Naive thymus-derived CD4-positive, alpha-beta T cell (primary cell): ENCODE measurements at regions of chr11 and their contacts with region 1.

Region 1: GRCh38 chr11:57712256-57713150 is at the start of gene TMX2:
- DNase-seq: peak; percentile 73 to 96 (median 91)
- ATAC-seq: peak; percentile 94
- H3K4me3 ChIP-seq: peak within 1 kb of the TSS; percentile 98
- H3K4me3 Mint-ChIP-seq: peak within 1 kb of the TSS; percentile 86 to 99 (median 98)
- H3K27ac ChIP-seq: peak within 1 kb of the TSS; percentile 95
- H3K27ac Mint-ChIP-seq: peak within 1 kb of the TSS; percentile 87 to 99 (median 95)
- H3K4me1 ChIP-seq: peaks cover 25 to 33% of the 10 kb centered on the region in 2 donors
- H3K4me1 Mint-ChIP-seq: peaks cover 14 to 61% (median 52%) of the 10 kb centered on the region in 7 donors
- H3K27me3 ChIP-seq: no peaks in the 10 kb centered on the region
- H3K27me3 Mint-ChIP-seq: no peaks in the 10 kb centered on the region
- total RNA-seq, gene TMX2: 43.0 to 67.3 (median 64.8) TPM

Region 2: DNA sequence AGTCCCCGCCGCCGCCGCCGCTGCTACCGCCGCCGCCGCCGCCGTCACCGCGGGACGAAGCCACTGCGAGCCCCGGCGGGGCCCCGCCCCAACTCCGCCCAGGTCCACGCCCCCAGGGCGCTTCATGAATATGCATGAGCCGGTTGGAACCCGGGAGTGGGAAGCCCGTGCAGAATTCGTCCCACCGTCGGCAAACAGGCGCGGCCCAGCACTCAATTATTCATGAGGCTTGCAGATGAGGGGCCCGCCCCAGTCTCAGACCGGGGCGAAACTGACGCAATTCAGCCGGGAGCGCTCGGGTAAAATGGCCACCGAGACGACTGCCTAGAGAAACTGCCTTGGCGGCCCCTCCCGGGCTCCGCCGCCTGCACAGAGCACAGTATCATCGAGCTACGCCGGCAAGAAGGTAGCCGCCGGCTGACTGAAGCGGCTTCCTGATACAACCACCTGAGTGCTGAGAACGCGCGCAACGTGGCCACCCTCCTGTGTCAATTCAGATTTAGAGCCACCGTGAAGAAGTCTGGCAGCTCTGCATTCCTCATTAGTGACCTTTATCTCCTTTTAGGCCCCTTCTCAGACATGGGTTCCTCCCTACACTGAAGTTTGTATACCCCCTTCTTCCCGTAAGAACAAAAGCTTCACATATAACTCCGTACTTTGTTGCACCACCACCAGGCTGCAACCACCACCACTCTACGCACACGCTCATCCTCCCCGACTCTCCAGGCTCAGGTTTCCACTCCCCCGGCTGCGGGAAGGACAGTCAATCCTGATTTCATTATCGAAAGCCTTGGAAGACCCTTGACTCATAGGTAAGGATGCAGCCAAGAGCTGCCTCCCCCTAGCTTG is 387.4 kb before region 1 on chr11 and contains the start of gene TNKS1BP1:
- CTCF ChIA-PET with region 1: no interaction called
- POLR2A ChIA-PET with region 1: no interaction called
- intact Hi-C with region 1: loop called in 1 of 2 experiments (anchors 1 kb)
- DNase-seq: peak; percentile 84 to 92 (median 90)
- ATAC-seq: peak; percentile 91
- H3K4me3 ChIP-seq: peak within 1 kb of the TSS; percentile 73
- H3K4me3 Mint-ChIP-seq: peak within 1 kb of the TSS; percentile 88 to 95 (median 91)
- H3K27ac ChIP-seq: peak within 1 kb of the TSS; percentile 79
- H3K27ac Mint-ChIP-seq: peak within 1 kb of the TSS; percentile 93 to 98 (median 95)
- H3K4me1 ChIP-seq: peaks cover 8 to 14% of the 10 kb centered on the region in 2 donors
- H3K4me1 Mint-ChIP-seq: peaks cover 30 to 58% (median 51%) of the 10 kb centered on the region in 7 donors
- H3K27me3 ChIP-seq: no peaks in the 10 kb centered on the region
- H3K27me3 Mint-ChIP-seq: no peaks in the 10 kb centered on the region
- total RNA-seq, gene TNKS1BP1: 11.2 to 22.0 (median 15.9) TPM

Region 3: DNA sequence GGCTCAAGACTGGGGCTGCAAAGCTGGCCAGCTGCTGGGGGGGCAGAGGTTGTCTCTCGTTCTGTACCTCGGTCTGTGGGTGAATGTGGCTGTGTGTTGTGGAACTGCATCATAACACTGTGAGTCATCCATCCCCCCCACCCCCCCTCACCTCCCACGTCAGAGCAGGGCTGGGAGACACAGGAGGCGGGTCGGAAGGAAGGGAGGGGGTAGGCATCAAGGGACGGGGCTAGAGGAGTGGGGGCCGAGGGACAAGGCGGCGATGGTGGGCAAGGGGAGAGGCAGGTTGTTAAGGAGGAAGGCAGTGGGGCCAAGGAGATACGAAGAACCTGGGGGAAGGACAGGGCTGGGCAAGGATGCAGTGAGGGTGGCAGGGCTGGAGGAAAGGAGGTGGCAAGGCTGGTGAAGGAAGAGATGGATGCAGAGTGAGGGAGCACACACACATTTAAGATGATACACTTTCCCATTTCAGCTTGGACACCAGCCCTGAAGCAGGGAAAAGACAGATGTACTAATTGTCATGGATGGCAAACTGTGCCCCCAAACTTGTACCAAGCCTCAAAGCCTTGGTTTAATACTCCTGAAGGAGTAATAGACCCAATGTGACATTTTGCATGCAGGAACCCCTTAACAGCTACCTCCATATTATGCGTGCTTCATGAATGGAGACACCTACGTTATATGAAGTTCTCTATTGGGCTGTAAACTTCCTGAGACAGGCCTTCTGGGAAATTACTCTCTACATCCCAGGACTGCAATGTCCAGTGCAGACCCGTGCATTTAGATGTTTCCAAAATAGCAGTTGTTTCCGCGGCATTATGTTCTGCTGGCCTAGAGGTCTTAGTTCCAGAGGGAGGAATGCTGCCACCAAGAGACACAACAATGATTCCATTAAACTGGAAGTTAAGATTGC is 62.4 kb before region 1 on chr11 and contains the start of gene YPEL4:
- CTCF ChIA-PET with region 1: no interaction called
- POLR2A ChIA-PET with region 1: interaction called, 3 read pairs
- intact Hi-C with region 1: loop called in 1 of 2 experiments (anchors 1 kb)
- DNase-seq: peak in 8 of 9 donors; percentile 47 to 86 (median 62)
- ATAC-seq: peak; percentile 93
- H3K4me3 ChIP-seq: peak within 1 kb of the TSS; percentile 66
- H3K4me3 Mint-ChIP-seq: peak within 1 kb of the TSS; percentile 79 to 93 (median 85)
- H3K27ac ChIP-seq: peak within 1 kb of the TSS; percentile 19
- H3K27ac Mint-ChIP-seq: peak within 1 kb of the TSS; percentile 68 to 93 (median 87)
- H3K4me1 ChIP-seq: peaks cover 11 to 18% of the 10 kb centered on the region in 2 donors
- H3K4me1 Mint-ChIP-seq: peaks cover 28 to 60% (median 48%) of the 10 kb centered on the region in 7 donors
- H3K27me3 ChIP-seq: peaks cover 10 to 16% of the 10 kb centered on the region in 2 donors
- H3K27me3 Mint-ChIP-seq: peaks cover 30 to 46% (median 42%) of the 10 kb centered on the region in 5 donors
- total RNA-seq, gene YPEL4: 0.70 to 13.4 (median 4.3) TPM

Region 4: DNA sequence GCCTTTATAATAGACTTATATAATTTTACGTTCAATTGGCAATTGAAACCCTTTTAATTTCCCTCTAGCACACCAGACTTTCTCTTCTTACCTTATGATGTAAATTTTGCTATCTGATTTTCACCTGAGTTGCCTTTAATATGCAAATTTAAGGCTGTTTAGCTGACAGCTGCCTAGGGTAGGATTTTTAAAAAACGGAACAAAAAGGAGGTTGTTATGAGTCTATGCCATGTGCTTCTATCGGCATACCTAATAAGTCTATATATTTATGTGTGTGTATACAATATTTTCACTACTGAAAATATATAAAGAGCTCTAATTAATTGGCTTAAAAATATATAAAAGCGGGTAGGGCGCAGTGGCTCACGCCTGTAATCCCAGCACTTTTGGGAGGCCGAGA is 17.0 kb after region 1 on chr11:
- CTCF ChIA-PET with region 1: interaction called, 4 read pairs
- POLR2A ChIA-PET with region 1: interaction called, 10 read pairs
- intact Hi-C with region 1: no loop called
- DNase-seq: no peak
- ATAC-seq: no peak
- H3K4me3 ChIP-seq: no peak overlapping the region
- H3K4me3 Mint-ChIP-seq: no peak overlapping the region
- H3K27ac ChIP-seq: no peak overlapping the region
- H3K27ac Mint-ChIP-seq: peak overlapping the region in 1 of 9 donors; percentile 24
- H3K4me1 ChIP-seq: no peaks in the 10 kb centered on the region
- H3K4me1 Mint-ChIP-seq: peaks cover 5 to 29% (median 13%) of the 10 kb centered on the region in 7 donors
- H3K27me3 ChIP-seq: no peaks in the 10 kb centered on the region
- H3K27me3 Mint-ChIP-seq: no peaks in the 10 kb centered on the region

Region 5: DNA sequence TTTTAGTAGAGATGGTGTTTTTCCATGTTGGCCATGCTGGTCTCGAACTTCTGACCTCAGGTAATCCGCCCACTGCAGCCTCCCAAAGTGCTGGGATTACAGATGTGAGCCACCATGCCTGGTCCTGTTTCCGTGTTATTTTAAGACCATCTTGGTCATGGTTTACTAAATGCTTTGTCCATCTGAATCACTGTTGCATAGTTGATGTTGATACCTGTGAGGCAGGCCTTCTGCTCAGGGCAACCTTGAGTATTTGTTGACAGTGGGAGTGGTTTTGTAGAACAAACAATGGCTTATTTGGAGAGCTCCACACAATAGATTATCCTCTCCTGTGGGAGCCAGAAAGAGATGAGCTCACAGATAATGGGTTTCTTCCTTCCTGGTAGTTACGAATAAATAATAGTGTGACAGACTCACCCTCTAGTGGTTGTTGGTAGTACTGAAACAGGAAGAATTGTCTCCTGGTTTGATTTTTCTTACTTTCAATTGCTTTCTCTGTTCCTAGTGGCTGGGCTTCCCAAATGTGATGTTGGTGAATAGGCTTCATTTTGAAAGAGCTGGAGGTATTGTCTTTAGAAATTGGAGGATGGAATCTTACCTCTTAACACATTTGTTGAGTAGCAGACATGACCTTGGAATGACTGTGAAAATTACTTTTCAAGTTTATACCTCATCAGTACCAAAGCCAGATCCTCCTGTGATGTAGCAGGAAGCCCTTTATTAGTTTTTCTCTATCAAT is 88.1 kb after region 1 on chr11:
- CTCF ChIA-PET with region 1: interaction called, 8 read pairs
- POLR2A ChIA-PET with region 1: interaction called, 6 read pairs
- intact Hi-C with region 1: loop called (anchors 1 kb)
- DNase-seq: peak in 7 of 9 donors; percentile 46 to 70 (median 64)
- ATAC-seq: peak; percentile 93
- H3K4me3 ChIP-seq: no peak overlapping the region
- H3K4me3 Mint-ChIP-seq: peak overlapping the region in 6 of 10 donors; percentile 33 to 57 (median 54)
- H3K27ac ChIP-seq: peak overlapping the region; percentile 39
- H3K27ac Mint-ChIP-seq: peak overlapping the region; percentile 42 to 92 (median 80)
- H3K4me1 ChIP-seq: peaks cover 8 to 10% of the 10 kb centered on the region in 2 donors
- H3K4me1 Mint-ChIP-seq: peaks cover 22 to 40% (median 30%) of the 10 kb centered on the region in 7 donors
- H3K27me3 ChIP-seq: no peaks in the 10 kb centered on the region
- H3K27me3 Mint-ChIP-seq: no peaks in the 10 kb centered on the region

Region 6: DNA sequence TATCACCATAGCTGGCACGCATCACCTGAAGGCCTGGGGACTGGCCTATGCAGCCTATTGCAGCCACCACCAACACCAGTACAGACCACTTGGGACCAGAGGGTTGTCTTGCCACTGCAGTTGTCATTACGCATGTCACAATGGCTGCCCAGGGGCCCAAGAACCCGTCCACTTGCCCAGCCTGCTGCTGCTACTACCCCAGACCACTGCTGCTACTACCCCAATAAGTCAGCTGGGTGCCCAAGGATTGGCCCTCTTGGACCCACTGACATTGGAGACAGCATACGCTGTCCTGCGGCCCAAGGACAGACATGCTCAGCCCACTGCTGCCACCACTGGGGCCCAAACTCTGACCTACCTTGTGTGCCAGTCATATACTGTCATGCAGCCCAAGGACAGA is 208.5 kb after region 1 on chr11:
- CTCF ChIA-PET with region 1: no interaction called
- POLR2A ChIA-PET with region 1: no interaction called
- intact Hi-C with region 1: no loop called
- DNase-seq: no peak
- ATAC-seq: no peak
- H3K4me3 ChIP-seq: no peak overlapping the region
- H3K4me3 Mint-ChIP-seq: no peak overlapping the region
- H3K27ac ChIP-seq: no peak overlapping the region
- H3K27ac Mint-ChIP-seq: no peak overlapping the region
- H3K4me1 ChIP-seq: no peaks in the 10 kb centered on the region
- H3K4me1 Mint-ChIP-seq: no peaks in the 10 kb centered on the region
- H3K27me3 ChIP-seq: no peaks in the 10 kb centered on the region
- H3K27me3 Mint-ChIP-seq: peaks cover 2 to 31% (median 22%) of the 10 kb centered on the region in 5 donors

Region 7: GRCh38 chr11:59668950-59669610 is 1956.6 kb after region 1 on chr11 and contains the start of gene PATL1:
- CTCF ChIA-PET with region 1: no interaction called
- POLR2A ChIA-PET with region 1: no interaction called
- intact Hi-C with region 1: loop called in 1 of 2 experiments (anchors 5 kb)
- DNase-seq: peak; percentile 96 to 100 (median 99)
- ATAC-seq: peak; percentile 94
- H3K4me3 ChIP-seq: peak within 1 kb of the TSS; percentile 94
- H3K4me3 Mint-ChIP-seq: peak within 1 kb of the TSS; percentile 83 to 100 (median 96)
- H3K27ac ChIP-seq: peak within 1 kb of the TSS; percentile 98
- H3K27ac Mint-ChIP-seq: peak within 1 kb of the TSS; percentile 97 to 100 (median 99)
- H3K4me1 ChIP-seq: peaks cover 17 to 23% of the 10 kb centered on the region in 2 donors
- H3K4me1 Mint-ChIP-seq: peaks cover 32 to 50% (median 41%) of the 10 kb centered on the region in 7 donors
- H3K27me3 ChIP-seq: no peaks in the 10 kb centered on the region
- H3K27me3 Mint-ChIP-seq: peaks cover 0 to 2% (median 0%) of the 10 kb centered on the region in 5 donors
- total RNA-seq, gene PATL1: 40.6 to 60.1 (median 45.3) TPM